ENCODE measurements at regions of chr12 and their contacts with region 1.

Region 1: GRCh38 chr12:3073438-3074250 is 3.5 kb upstream of the TSPAN9 start:
- DNase-seq: peak; percentile 87
- ATAC-seq: peak; percentile 45
- H3K4me3 ChIP-seq: no peak overlapping the region
- H3K27ac ChIP-seq: no peak overlapping the region
- H3K4me1 ChIP-seq: peaks cover 9% of the 10 kb centered on the region
- H3K27me3 ChIP-seq: no peaks in the 10 kb centered on the region
- CTCF ChIP-seq: peak; percentile 96

Region 2: DNA sequence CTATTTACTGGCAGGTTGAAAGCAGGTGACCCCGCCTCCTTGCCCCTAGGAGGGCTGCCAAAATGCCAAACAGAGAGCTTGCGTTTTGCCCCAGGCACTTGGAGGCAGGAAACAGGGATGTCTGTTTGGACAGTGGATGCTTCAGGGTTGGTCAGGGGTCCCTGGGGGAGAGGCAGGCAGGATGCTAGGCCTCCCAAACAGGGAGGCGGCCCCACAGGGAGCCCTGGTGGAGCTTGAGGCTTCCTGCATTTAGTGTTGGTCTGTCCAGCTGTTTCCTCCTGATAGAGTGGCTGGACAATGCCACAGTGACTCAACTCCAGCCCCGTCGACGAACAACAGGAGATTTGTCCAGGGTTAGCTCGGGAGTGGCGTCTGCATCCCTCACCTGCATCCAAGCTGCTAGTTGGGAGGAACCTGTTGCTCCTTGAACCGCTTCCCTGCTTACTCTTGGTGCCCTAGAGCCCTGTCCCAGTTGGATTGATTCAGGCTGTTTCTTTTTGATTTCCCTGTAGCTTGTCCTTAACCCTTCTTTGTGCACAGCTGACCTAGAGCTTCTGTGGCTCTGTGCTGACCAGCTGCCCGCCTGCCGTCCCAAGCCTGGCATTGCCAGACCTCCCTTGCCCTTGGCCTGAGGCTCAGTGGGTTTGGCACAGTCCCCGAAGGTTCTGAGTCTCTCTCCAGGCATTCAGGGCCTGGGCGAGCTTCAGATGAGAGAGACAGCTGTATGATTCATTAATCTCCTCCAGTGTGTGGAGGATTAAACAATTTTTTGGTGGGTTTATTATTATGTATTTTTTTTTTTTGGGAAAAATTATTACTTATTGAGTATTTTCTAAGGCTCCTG is 49.4 kb after region 1 on chr12:
- CTCF ChIA-PET with region 1: interaction called, 5 read pairs
- POLR2A ChIA-PET with region 1: no interaction called
- intact Hi-C with region 1: loop called (anchors 2 kb)
- DNase-seq: peak; percentile 74
- ATAC-seq: peak; percentile 85
- H3K4me3 ChIP-seq: no peak overlapping the region; the same call in 1 of the 2 replicates
- H3K27ac ChIP-seq: peak overlapping the region; percentile 64
- H3K4me1 ChIP-seq: peaks cover 20% of the 10 kb centered on the region
- H3K27me3 ChIP-seq: no peaks in the 10 kb centered on the region
- CTCF ChIP-seq: no peak

Region 3: GRCh38 chr12:3177778-3178425 is 104.3 kb after region 1 on chr12:
- CTCF ChIA-PET with region 1: no interaction called
- POLR2A ChIA-PET with region 1: no interaction called
- intact Hi-C with region 1: no loop called
- DNase-seq: no peak
- ATAC-seq: no peak
- H3K4me3 ChIP-seq: no peak overlapping the region
- H3K27ac ChIP-seq: no peak overlapping the region
- H3K4me1 ChIP-seq: no peaks in the 10 kb centered on the region
- H3K27me3 ChIP-seq: no peaks in the 10 kb centered on the region
- CTCF ChIP-seq: no peak